ENCODE measurements at regions of chr22 and their contacts with region 1.

Region 1: DNA sequence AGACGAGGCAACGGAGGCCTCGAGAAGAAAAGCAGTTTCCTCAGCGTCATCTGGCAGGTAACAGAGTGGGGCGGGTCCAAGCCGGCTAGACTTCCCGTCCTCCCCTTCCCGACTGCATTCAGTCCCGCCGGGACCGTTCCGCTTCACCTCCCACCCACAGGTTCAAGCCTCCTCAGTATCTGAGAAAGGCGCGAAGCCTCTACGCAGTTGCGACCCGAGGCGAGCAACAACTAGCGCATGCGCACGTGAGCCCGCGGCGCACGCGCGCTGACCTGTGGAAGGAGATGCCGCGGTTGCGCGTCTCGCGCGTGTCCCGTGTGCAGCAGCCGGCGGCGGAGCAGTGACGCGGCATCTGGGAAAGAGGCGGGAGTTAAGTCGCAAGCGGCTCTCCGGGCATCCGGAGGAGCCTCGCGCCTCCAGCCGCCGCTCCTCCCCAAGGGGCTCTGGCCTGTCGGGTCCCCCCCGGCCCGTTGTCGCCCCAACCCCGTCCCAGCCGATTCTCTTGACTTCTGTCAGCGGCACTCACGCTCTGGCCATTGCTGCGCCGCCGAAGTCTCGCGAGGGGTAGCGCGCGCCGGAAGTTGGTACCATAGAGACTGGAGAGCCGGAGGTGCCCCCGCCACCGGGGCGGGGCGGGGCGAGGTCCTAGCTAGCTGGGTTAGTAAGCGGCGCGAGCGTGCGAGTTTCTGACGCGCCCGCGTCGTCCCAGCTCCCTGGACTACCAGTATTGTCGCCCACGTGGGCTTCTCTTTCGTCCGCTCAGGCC is at the start of gene THAP7:
- DNase-seq: peak; percentile 95
- H3K4me3 ChIP-seq: peak within 1 kb of the TSS; percentile 77 to 86 (median 86)
- H3K27ac ChIP-seq: peak within 1 kb of the TSS; percentile 88
- H3K4me1 ChIP-seq: peaks cover 22% of the 10 kb centered on the region
- H3K27me3 ChIP-seq: no peaks in the 10 kb centered on the region
- CTCF ChIP-seq: no peak
- POLR2A ChIP-seq: peak; percentile 85
- total RNA-seq, gene THAP7: 13.5 and 14.9 TPM in 2 replicates

Region 2: DNA sequence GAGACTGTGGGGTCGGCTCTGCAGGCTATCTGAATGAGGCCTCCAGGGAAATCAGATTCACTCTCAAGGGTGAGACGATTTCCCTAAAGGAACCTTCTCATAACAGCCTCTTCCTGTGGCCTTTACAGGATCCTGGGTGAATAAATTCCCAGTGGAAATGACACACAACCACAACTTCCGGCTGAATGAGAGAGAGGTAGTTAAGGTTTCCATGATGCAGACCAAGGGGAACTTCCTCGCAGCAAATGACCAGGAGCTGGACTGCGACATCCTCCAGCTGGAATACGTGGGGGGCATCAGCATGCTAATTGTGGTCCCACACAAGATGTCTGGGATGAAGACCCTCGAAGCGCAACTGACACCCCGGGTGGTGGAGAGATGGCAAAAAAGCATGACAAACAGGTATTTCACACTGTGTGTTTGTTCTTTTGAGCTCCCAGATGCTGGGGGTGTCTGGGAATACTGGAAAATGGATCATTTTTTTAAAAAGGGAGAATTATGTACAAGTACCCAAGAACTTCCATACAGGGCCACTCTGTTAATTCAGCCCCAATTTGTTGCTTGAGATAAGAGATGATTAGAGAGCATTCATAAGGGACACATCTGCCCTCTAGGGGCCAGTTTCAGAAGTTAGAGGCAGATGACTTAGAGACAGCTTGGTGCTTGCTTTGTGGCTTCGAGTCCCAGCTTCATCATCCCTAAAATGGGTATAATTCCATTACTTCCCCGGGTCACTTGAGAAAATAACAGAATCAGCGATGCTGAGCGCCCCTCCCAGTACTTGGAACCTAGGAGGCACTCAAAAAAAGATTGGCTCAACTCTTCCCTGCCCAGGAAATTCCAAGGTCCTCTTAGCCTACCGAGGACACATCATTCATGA is 217.7 kb before region 1 on chr22:
- CTCF ChIA-PET with region 1: no interaction called
- POLR2A ChIA-PET with region 1: no interaction called
- dilution Hi-C with region 1: no loop called
- intact Hi-C with region 1: no loop called
- DNase-seq: peak; percentile 85
- H3K4me3 ChIP-seq: peak overlapping the region in 1 of 3 experiments; percentile 32
- H3K27ac ChIP-seq: peak overlapping the region; percentile 97
- H3K4me1 ChIP-seq: peaks cover 55% of the 10 kb centered on the region
- H3K27me3 ChIP-seq: no peaks in the 10 kb centered on the region
- CTCF ChIP-seq: peak; percentile 76 to 77
- POLR2A ChIP-seq: peak; percentile 22

Region 3: DNA sequence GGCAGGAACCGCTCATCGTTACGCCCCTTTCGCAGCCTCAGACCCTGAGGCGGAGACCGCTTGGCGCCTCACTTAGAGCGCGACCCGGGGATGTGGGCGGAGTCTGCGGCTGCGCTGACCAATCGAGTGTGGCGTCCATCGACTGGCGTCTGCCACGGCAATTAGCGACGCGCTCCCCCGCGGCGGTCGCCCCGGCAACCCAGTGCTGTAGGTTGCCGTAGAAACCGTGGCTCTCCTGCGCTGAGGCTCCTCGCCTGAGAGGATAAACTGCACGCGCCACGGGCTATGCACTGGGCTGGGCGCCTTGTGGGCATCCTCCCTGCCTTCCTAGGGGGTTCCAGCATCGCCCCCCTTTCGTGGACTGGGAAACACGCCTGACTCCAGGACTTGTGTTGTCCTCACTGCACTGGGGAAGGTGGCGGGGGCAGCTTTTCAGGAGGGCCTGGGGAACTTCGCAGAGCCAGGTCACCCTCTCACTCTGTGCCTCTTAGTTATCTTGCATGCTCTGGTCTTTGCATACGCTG is 12.5 kb after region 1 on chr22:
- CTCF ChIA-PET with region 1: interaction called, 6 read pairs
- POLR2A ChIA-PET with region 1: no interaction called
- dilution Hi-C with region 1: no loop called
- intact Hi-C with region 1: loop called (anchors 1 kb)
- DNase-seq: peak; percentile 91
- H3K4me3 ChIP-seq: peak overlapping the region; percentile 12 to 47 (median 43)
- H3K27ac ChIP-seq: peak overlapping the region; percentile 66
- H3K4me1 ChIP-seq: peaks cover 13% of the 10 kb centered on the region
- H3K27me3 ChIP-seq: no peaks in the 10 kb centered on the region
- CTCF ChIP-seq: no peak
- POLR2A ChIP-seq: no peak

Measured in endothelial cell of umbilical vein (primary cell).